Uterus (tissue), 4 donors: ENCODE measurements at regions of chr2 and their contacts with region 1.

Region 1: DNA sequence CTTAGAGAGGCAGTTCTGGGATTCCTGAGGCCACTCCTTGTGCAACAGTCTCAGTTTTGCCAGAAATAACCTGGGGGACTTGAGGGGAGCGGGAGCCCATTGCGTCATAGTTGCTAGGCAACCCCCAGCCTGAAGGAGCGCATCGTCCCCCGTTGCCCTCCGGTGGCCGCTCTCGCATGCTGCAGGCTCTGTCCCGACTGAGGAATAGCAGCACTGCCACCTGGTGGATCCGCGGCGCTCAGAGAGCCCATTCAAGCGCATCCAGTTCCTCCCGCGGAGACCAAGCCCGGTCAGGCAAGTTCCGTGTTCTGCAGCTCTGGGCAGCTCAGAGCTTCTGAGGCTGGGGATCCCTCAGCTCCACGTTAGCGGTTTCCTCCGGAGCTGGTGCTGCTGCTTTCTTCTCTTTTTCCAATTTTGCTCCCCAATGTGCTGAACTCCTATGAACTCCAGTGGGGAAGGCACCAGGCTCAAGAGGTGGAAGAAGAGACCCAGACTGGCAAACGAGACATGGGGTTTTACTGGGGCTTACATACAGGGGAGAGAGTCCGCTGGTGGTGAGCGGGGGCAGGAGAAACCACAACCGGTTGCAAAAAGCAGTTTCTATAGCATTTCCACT is 15.1 kb downstream of the SLC4A3 start:
- DNase-seq: peak; percentile 99
- H3K4me3 ChIP-seq: no peak overlapping the region
- H3K27ac ChIP-seq: peak overlapping the region; percentile 9 to 79
- H3K4me1 ChIP-seq: peaks cover 0 to 4% of the 10 kb centered on the region in 2 donors
- H3K27me3 ChIP-seq: no peaks in the 10 kb centered on the region
- CTCF ChIP-seq: peak; percentile 97 to 100 (median 100)
- POLR2A ChIP-seq: peak in 1 of 2 donors; percentile 29

Region 2: DNA sequence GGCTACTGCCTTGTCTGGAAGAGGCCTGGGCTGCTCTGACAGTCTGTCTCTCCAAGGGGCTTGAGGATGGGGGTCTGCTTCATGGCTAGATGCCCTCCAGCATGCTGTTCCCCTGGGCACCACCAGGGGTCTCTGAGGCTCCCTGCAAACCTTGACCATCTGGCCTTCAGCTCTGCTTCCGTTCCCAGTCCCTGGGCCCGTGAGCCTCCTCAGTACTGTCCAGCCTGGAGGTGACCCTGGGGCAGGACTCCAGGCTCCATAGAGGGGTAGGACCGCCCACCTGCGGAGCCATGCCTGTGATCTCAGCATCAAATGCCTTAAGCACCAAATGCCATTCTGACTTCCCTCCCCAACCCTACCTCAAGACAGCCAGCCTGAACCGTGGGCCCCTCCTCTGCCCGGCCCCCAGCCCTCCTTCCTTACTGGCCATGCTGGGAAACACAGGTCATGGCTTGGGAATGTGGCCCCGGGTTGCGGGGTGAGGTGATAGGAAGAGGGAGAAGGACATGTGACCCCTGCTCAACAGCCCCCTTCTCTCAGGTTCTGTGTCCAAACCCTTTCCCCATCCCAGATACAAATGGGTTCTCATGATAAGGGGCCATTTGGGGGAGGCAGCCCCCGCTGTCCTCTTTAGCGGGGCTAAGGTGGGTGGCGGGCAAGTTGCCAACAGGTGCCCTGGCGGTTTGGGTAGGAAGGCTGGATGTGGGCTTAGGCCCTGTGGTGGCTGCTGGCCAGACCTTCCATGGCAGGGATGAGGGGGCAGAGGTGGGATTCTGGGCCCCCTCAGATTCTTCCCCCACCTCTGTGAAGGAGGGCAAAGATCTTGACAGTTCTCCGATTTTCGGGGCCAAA is 182.9 kb before region 1 on chr2:
- intact Hi-C with region 1: no loop called
- DNase-seq: peak; percentile 69 to 71
- H3K4me3 ChIP-seq: no peak overlapping the region
- H3K27ac ChIP-seq: peak overlapping the region; percentile 97 to 98
- H3K4me1 ChIP-seq: peaks cover 0 to 22% of the 10 kb centered on the region in 2 donors
- H3K27me3 ChIP-seq: no peaks in the 10 kb centered on the region
- CTCF ChIP-seq: peak; percentile 74 to 90 (median 82)
- POLR2A ChIP-seq: no peak

Region 3: GRCh38 chr2:219541611-219542180 is 100.9 kb before region 1 on chr2:
- intact Hi-C with region 1: loop called (anchors 2 kb)
- DNase-seq: peak; percentile 67 to 68
- H3K4me3 ChIP-seq: no peak overlapping the region
- H3K27ac ChIP-seq: no peak overlapping the region
- H3K4me1 ChIP-seq: peaks cover 0 to 5% of the 10 kb centered on the region in 2 donors
- H3K27me3 ChIP-seq: no peaks in the 10 kb centered on the region
- CTCF ChIP-seq: peak; percentile 80 to 83 (median 81)
- POLR2A ChIP-seq: no peak

Region 4: DNA sequence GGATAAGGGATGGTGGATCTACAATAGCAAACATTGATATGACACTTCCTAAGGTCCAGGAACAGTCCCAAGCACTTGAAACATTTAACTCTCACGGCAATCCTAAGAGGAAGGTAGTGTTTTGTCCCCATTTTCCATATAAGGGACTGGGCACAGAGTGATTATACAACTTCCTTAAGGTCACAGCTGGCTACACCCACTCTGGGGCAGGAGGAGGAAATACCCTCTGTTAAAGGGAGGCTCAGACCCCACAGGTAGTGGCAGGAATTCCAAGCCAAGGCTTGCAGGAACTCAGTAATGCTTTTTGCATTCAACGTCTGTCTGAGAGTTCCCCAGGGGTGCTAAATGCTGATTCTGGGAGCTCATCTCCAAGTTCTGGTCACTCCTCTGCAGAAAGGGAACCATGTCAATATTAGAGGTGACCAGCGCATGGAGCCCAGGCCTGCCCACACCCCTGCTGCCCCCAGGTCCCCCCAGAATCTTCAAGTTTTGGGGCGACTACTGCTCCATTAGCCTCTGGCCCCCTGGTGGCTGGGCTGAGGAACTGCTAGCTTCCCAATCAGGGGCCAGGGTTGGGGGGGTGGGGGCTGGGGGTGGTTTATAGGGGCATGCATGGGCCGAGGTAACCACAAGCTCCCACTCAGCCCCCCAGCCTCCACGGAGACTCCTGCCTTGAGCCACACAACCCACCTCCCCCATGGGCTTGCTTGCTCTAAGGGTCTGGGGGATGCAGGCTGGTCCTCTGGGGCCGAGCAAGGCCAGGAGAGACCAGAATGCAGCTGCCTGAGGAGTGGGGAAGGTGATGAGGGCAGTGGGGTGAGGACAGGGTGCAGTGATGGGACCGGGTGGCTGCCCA is 82.3 kb before region 1 on chr2:
- intact Hi-C with region 1: loop called (anchors 10 kb)
- DNase-seq: no peak
- H3K4me3 ChIP-seq: no peak overlapping the region
- H3K27ac ChIP-seq: no peak overlapping the region
- H3K4me1 ChIP-seq: no peaks in the 10 kb centered on the region
- H3K27me3 ChIP-seq: no peaks in the 10 kb centered on the region
- CTCF ChIP-seq: peak in 2 of 4 experiments; percentile 47 to 73
- POLR2A ChIP-seq: no peak